ENCODE measurements at regions of chr7 and their contacts with region 1.

Region 1: GRCh38 chr7:120950539-120951308 is at the start of gene ING3:
- DNase-seq: peak; percentile 98
- total RNA-seq, gene ING3: 15.5 TPM

Region 2: DNA sequence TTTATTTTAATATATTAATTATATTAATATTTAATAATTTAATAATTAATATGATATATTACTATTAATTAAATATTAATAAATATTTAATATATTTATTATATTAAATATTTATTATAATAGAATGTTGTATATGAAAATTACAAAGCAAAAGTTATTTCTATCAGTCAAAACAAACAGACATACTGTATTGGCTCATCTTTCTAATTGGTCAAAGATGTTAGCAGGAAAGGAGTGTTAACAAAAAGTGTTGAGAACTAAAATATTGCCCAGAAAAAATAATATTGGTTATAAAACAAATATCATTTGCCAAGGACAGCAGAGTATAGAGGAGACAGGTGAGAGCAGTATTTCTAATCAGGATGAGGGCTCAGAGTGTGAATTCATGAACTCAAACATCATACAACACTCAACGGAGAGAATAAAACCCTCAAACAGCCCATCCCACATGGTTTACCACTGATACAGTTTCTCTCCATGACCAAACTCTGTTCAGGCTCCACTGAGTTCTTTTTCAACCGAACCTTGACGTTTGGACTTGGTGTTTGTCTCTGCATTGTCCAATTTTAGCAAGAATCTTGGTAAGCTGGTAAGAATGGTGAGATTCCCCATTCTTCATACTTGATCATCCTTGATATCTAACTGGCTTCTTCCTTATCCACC is 150.8 kb before region 1 on chr7:
- intact Hi-C with region 1: loop called (anchors 5 kb)
- DNase-seq: no peak

Region 3: GRCh38 chr7:121019018-121019417 is 68.3 kb after region 1 on chr7:
- intact Hi-C with region 1: no loop called
- DNase-seq: no peak

Measured in cardiac septum (tissue), 1 donor.